CD4-positive, alpha-beta memory T cell (primary cell): ENCODE measurements at regions of chr20 and their contacts with region 1.

Region 1: GRCh38 chr20:45812157-45813020 is at the start of gene UBE2C:
- DNase-seq: peak; percentile 92 to 96 (median 94)
- H3K4me3 ChIP-seq: peak within 1 kb of the TSS; percentile 37 to 68
- H3K4me3 Mint-ChIP-seq: peak within 1 kb of the TSS; percentile 82 to 92 (median 86)
- H3K27ac ChIP-seq: peak within 1 kb of the TSS; percentile 44
- H3K27ac Mint-ChIP-seq: peak within 1 kb of the TSS; percentile 53 to 89 (median 70)
- H3K4me1 ChIP-seq: peaks cover 15% of the 10 kb centered on the region
- H3K4me1 Mint-ChIP-seq: peaks cover 7 to 23% (median 14%) of the 10 kb centered on the region in 4 donors
- H3K27me3 ChIP-seq: no peaks in the 10 kb centered on the region
- H3K27me3 Mint-ChIP-seq: no peaks in the 10 kb centered on the region
- total RNA-seq, gene UBE2C: 0.55 to 0.61 TPM

Region 2: GRCh38 chr20:45792332-45792686 is 20.1 kb before region 1 on chr20:
- CTCF ChIA-PET with region 1: no interaction called
- POLR2A ChIA-PET with region 1: interaction called, 4 read pairs
- intact Hi-C with region 1: loop called (anchors 2 kb)
- DNase-seq: no peak
- H3K4me3 ChIP-seq: peak overlapping the region; percentile 79 to 93
- H3K4me3 Mint-ChIP-seq: peak overlapping the region; percentile 85 to 98 (median 93)
- H3K27ac ChIP-seq: peak overlapping the region; percentile 88
- H3K27ac Mint-ChIP-seq: peak overlapping the region; percentile 83 to 99 (median 95)
- H3K4me1 ChIP-seq: peaks cover 16% of the 10 kb centered on the region
- H3K4me1 Mint-ChIP-seq: peaks cover 11 to 18% (median 14%) of the 10 kb centered on the region in 4 donors
- H3K27me3 ChIP-seq: no peaks in the 10 kb centered on the region
- H3K27me3 Mint-ChIP-seq: no peaks in the 10 kb centered on the region

Region 3: DNA sequence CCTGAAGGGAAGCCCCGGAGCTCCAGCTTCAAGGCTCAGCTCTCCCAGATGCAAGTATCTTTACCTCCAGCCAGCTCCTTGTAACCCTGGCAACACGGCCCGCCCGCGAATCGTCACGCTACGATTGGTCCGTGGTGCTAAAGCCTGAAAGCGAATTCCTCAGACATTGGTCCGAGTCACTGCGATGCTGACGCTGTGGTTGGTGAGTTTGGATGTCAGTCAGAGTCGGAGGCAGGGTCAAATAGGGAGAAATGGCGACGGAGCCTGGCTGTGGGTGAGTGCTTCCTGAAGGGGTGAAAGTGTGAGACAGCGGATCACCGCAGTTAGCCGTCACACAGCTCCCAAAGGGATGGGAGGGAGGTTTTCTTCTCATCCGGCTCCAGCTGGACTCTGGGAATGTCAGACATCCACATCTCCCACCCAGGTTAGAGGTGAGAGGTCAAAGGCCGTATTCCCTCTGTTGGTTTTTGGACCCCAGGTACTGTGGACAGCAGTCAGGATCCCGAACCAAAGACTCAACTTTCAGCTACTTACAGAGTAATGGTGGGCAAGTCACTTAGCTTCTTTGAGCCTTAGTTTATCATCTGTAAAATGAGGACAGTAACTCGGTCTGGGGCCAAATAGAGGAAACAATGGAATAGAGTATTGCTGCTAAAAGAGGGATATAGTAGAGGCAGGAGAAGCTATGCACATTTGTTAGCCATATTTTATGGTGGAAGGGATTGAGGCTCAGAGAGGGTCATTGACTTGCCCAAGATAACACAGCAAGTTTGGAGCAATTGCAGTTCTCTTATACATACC is 68.8 kb after region 1 on chr20 and contains the start of gene ZSWIM1:
- CTCF ChIA-PET with region 1: no interaction called
- POLR2A ChIA-PET with region 1: no interaction called
- intact Hi-C with region 1: loop called (anchors 2 kb)
- DNase-seq: peak; percentile 97 to 99 (median 97)
- H3K4me3 ChIP-seq: peak within 1 kb of the TSS; percentile 68 to 99
- H3K4me3 Mint-ChIP-seq: peak within 1 kb of the TSS; percentile 82 to 94 (median 90)
- H3K27ac ChIP-seq: peak within 1 kb of the TSS; percentile 65
- H3K27ac Mint-ChIP-seq: peak within 1 kb of the TSS; percentile 83 to 97 (median 95)
- H3K4me1 ChIP-seq: peaks cover 44% of the 10 kb centered on the region
- H3K4me1 Mint-ChIP-seq: peaks cover 30 to 47% (median 37%) of the 10 kb centered on the region in 4 donors
- H3K27me3 ChIP-seq: no peaks in the 10 kb centered on the region
- H3K27me3 Mint-ChIP-seq: no peaks in the 10 kb centered on the region
- total RNA-seq, gene ZSWIM1: 18.2 to 18.5 TPM